Panc1 (cell line): ENCODE measurements at regions of chr6 and their contacts with region 1.

Region 1: GRCh38 chr6:19851241-19852089 is 14.3 kb downstream of the ID4 start:
- DNase-seq: peak; percentile 24
- ATAC-seq: peak; percentile 97
- H3K4me3 ChIP-seq: peak overlapping the region in 1 of 2 experiments; percentile 6; a peak in 1 of 4 replicates
- H3K27ac ChIP-seq: peak overlapping the region; percentile 60
- H3K4me1 ChIP-seq: peaks cover 18% of the 10 kb centered on the region
- H3K27me3 ChIP-seq: no peaks in the 10 kb centered on the region
- CTCF ChIP-seq: peak; percentile 93

Region 2: DNA sequence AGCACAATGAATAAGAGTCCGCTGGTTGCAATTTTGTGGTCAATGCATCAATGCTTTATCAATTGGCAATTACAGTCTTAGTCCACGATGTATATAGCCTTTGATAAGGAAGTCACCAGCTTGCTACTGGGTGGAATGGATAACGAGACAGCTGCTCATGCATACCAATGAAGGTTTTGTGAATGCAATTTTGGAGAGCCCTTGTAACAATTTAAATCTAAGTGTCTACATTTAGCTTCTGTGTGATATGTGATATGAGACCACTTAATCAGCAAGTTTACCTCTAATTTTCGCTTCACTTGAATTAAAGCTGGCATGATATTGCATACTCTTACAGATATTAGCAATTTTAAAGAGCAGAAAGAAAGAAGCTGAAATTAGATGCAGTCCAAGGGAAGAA is 920.4 kb before region 1 on chr6:
- CTCF ChIA-PET with region 1: no interaction called
- POLR2A ChIA-PET with region 1: no interaction called
- in situ Hi-C with region 1: no loop called
- intact Hi-C with region 1: no loop called
- DNase-seq: no peak
- ATAC-seq: no peak
- H3K4me3 ChIP-seq: no peak overlapping the region
- H3K27ac ChIP-seq: no peak overlapping the region
- H3K4me1 ChIP-seq: no peaks in the 10 kb centered on the region
- H3K27me3 ChIP-seq: no peaks in the 10 kb centered on the region
- CTCF ChIP-seq: no peak

Region 3: DNA sequence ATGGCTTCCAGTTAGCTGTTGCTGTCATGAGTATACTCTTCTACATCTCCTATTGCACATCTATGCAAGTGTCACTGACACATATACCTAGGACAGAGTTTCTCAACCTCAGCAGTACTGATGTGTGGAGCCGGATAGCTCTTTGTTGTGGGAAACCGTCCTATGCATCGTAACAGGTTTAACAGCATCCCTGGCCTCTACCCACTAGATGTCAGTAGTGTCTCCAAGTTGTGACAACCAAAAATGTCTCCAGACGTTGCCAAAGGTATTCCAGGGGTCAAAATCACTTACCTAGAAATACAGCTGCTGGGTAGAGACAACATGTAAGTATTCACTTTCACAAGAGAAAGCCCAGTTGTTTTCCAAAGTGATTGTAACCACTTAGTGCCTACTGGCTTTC is 826.7 kb before region 1 on chr6:
- CTCF ChIA-PET with region 1: no interaction called
- POLR2A ChIA-PET with region 1: no interaction called
- in situ Hi-C with region 1: no loop called
- intact Hi-C with region 1: loop called (anchors 5 kb)
- DNase-seq: peak; percentile 28
- ATAC-seq: peak; percentile 69; the same call in 1 of the 2 replicates
- H3K4me3 ChIP-seq: no peak overlapping the region
- H3K27ac ChIP-seq: no peak overlapping the region
- H3K4me1 ChIP-seq: no peaks in the 10 kb centered on the region
- H3K27me3 ChIP-seq: no peaks in the 10 kb centered on the region
- CTCF ChIP-seq: peak; percentile 73